ENCODE measurements at regions of chr1 and their contacts with region 1.

Region 1: GRCh38 chr1:43934101-43934985 is 742 bp downstream of the ARTN start:
- DNase-seq: peak; percentile 65
- H3K4me3 Mint-ChIP-seq: no peak overlapping the region
- H3K27ac Mint-ChIP-seq: no peak overlapping the region
- H3K4me1 Mint-ChIP-seq: peaks cover 11% of the 10 kb centered on the region
- H3K27me3 Mint-ChIP-seq: peaks cover 11% of the 10 kb centered on the region

Region 2: GRCh38 chr1:43650310-43651085 is 283.8 kb before region 1 on chr1:
- CTCF ChIA-PET with region 1: interaction called, 10 read pairs
- POLR2A ChIA-PET with region 1: interaction called, 10 read pairs
- DNase-seq: peak; percentile 93
- H3K4me3 Mint-ChIP-seq: peak overlapping the region; percentile 99
- H3K27ac Mint-ChIP-seq: peak overlapping the region; percentile 94
- H3K4me1 Mint-ChIP-seq: peaks cover 37% of the 10 kb centered on the region
- H3K27me3 Mint-ChIP-seq: peaks cover 5% of the 10 kb centered on the region

Region 3: GRCh38 chr1:43769350-43769908 is 164.9 kb before region 1 on chr1:
- CTCF ChIA-PET with region 1: interaction called, 324 read pairs
- POLR2A ChIA-PET with region 1: interaction called, 13 read pairs
- DNase-seq: no peak
- H3K4me3 Mint-ChIP-seq: no peak overlapping the region
- H3K27ac Mint-ChIP-seq: no peak overlapping the region
- H3K4me1 Mint-ChIP-seq: peaks cover 4% of the 10 kb centered on the region
- H3K27me3 Mint-ChIP-seq: no peaks in the 10 kb centered on the region

Region 4: GRCh38 chr1:43946236-43947060 is 12.1 kb after region 1 on chr1 and contains the start of gene IPO13:
- CTCF ChIA-PET with region 1: interaction called, 102 read pairs
- POLR2A ChIA-PET with region 1: interaction called, 25 read pairs
- DNase-seq: peak; percentile 96
- H3K4me3 Mint-ChIP-seq: peak within 1 kb of the TSS; percentile 89
- H3K27ac Mint-ChIP-seq: peak within 1 kb of the TSS; percentile 88
- H3K4me1 Mint-ChIP-seq: peaks cover 44% of the 10 kb centered on the region
- H3K27me3 Mint-ChIP-seq: no peaks in the 10 kb centered on the region
- total RNA-seq, gene IPO13: 21.5 to 23.5 TPM

Measured in activated CD4-positive, alpha-beta memory T cell treated with anti-CD3 and anti-CD28 coated beads, Interleukin-2, amount 10 ng/mL, durations not matched to agents 7 days and 5 days (primary cell).